ENCODE measurements at regions of chr1 and their contacts with region 1.

Region 1: GRCh38 chr1:58155418-58156123 is 391.0 kb downstream of the OMA1 start:
- DNase-seq: no peak
- ATAC-seq: peak; percentile 41
- H3K4me3 ChIP-seq: no peak overlapping the region
- H3K27ac ChIP-seq: no peak overlapping the region
- H3K4me1 ChIP-seq: peaks cover 3% of the 10 kb centered on the region; the same call in 1 of the 2 replicates
- H3K27me3 ChIP-seq: no peaks in the 10 kb centered on the region; a peak in 1 of 4 replicates
- CTCF ChIP-seq: peak; percentile 26 to 54 (median 52)
- EP300 ChIP-seq: no peak
- POLR2A ChIP-seq: no peak
- RAD21 ChIP-seq: peak; percentile 37; the same call in 1 of the 2 replicates

Region 2: DNA sequence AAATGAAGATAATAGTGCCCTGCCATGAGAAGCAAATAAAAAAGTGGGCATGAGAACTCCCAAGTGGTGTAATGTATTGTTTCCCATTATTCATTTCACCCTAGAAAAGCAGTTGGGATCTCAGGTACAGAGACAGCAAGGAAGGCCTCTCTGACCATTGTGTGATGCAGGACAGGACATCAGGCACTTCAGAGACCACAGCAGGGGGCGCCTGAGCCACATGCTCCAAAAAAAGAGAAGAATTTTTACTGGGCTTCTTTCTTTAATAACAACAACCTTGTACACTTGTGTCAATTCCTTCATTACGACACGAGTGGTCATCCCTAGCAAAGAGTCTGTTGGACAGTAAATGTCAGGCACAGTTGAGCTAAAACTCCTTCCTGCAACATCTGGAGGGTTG is 142.3 kb before region 1 on chr1:
- CTCF ChIA-PET with region 1: interaction called, 21 read pairs
- POLR2A ChIA-PET with region 1: no interaction called
- RAD21 ChIA-PET with region 1: interaction called, 4 read pairs
- SMC1A ChIA-PET with region 1: interaction called, 18 read pairs
- in situ Hi-C with region 1: no loop called
- intact Hi-C with region 1: no loop called
- DNase-seq: no peak
- ATAC-seq: peak; percentile 36; the same call in 1 of the 3 replicates
- H3K4me3 ChIP-seq: no peak overlapping the region
- H3K27ac ChIP-seq: no peak overlapping the region
- H3K4me1 ChIP-seq: no peaks in the 10 kb centered on the region
- H3K27me3 ChIP-seq: no peaks in the 10 kb centered on the region
- CTCF ChIP-seq: peak; percentile 8 to 35 (median 25); a peak in 3 of 6 replicates
- EP300 ChIP-seq: no peak
- POLR2A ChIP-seq: no peak
- RAD21 ChIP-seq: peak; percentile 42

Region 3: DNA sequence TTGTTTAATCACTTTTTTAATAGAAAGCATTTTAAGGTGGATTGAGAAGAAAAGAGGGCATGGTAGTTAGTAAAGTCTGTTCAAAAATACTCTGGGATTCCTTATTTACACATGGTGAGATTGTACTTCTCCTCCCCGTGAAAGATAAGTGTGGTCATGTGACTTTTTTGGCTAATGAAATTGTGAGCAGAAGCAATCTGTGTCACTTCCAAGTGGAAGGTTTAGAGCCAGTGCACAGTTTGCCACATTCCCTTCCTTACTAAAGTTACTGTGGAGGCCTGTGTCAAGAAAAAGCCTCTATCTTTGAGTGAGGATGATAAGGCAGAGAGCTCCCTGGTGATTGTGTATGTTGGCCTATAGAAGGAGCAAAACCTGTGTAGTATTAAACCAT is 80.4 kb before region 1 on chr1:
- CTCF ChIA-PET with region 1: interaction called, 3 read pairs
- POLR2A ChIA-PET with region 1: interaction called, 3 read pairs
- RAD21 ChIA-PET with region 1: interaction called, 3 read pairs
- SMC1A ChIA-PET with region 1: interaction called, 10 read pairs
- in situ Hi-C with region 1: no loop called
- intact Hi-C with region 1: no loop called
- DNase-seq: no peak
- ATAC-seq: no peak
- H3K4me3 ChIP-seq: no peak overlapping the region
- H3K27ac ChIP-seq: no peak overlapping the region
- H3K4me1 ChIP-seq: no peaks in the 10 kb centered on the region
- H3K27me3 ChIP-seq: no peaks in the 10 kb centered on the region; a peak in 2 of 4 replicates
- CTCF ChIP-seq: no peak
- EP300 ChIP-seq: no peak
- POLR2A ChIP-seq: no peak
- RAD21 ChIP-seq: no peak

Region 4: DNA sequence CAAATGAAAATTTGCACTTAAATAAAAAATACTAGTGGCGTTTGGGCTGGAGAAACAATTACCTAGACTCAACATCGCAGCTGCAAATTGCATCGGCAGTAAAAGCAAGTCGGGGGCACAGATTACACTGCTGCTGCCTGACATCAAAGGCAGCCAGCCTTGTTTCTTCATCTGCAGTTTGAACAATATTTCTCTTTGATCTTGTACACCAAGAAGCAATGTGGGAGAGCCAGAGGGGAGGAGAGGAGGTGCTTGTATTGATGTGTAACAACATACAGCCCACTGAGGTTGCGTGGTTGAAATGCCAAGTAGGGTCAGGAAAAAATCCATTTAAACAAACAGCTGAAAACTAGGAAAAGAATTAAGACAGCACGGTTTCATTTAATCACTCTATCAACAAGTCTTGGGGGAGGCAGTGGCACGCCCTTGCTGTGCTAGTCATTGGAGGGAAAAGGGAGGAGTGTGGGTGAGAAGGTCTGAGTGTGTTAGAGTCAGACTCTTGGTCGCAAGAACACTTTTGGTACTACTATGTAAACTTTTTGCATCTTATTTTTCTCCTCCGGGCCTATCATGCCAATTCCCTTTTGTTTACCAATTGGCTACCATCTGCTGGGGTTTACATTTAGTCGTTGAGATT is 65.6 kb before region 1 on chr1:
- CTCF ChIA-PET with region 1: interaction called, 8 read pairs
- POLR2A ChIA-PET with region 1: interaction called, 4 read pairs
- RAD21 ChIA-PET with region 1: interaction called, 3 read pairs
- SMC1A ChIA-PET with region 1: interaction called, 28 read pairs
- in situ Hi-C with region 1: no loop called
- intact Hi-C with region 1: no loop called
- DNase-seq: no peak
- ATAC-seq: no peak
- H3K4me3 ChIP-seq: no peak overlapping the region
- H3K27ac ChIP-seq: no peak overlapping the region
- H3K4me1 ChIP-seq: no peaks in the 10 kb centered on the region
- H3K27me3 ChIP-seq: no peaks in the 10 kb centered on the region; a peak in 1 of 4 replicates
- CTCF ChIP-seq: no peak
- EP300 ChIP-seq: no peak
- POLR2A ChIP-seq: no peak
- RAD21 ChIP-seq: no peak

Region 5: GRCh38 chr1:58119971-58120370 is 35.6 kb before region 1 on chr1:
- CTCF ChIA-PET with region 1: interaction called, 8 read pairs
- POLR2A ChIA-PET with region 1: interaction called, 5 read pairs
- RAD21 ChIA-PET with region 1: interaction called, 11 read pairs
- SMC1A ChIA-PET with region 1: interaction called, 13 read pairs
- in situ Hi-C with region 1: no loop called
- intact Hi-C with region 1: no loop called
- DNase-seq: no peak
- ATAC-seq: no peak
- H3K4me3 ChIP-seq: no peak overlapping the region
- H3K27ac ChIP-seq: no peak overlapping the region
- H3K4me1 ChIP-seq: no peaks in the 10 kb centered on the region
- H3K27me3 ChIP-seq: no peaks in the 10 kb centered on the region
- CTCF ChIP-seq: no peak
- EP300 ChIP-seq: no peak
- POLR2A ChIP-seq: no peak
- RAD21 ChIP-seq: no peak